ENCODE measurements at regions of chr4 and their contacts with region 1.

Region 1: GRCh38 chr4:153750197-153750817 is 9.5 kb downstream of the RNF175 start:
- DNase-seq: peak; percentile 72
- H3K4me3 ChIP-seq: no peak overlapping the region
- H3K27ac ChIP-seq: no peak overlapping the region
- H3K4me1 ChIP-seq: peaks cover 6 to 13% of the 10 kb centered on the region in 2 experiments; a peak in 3 of 4 replicates
- H3K27me3 ChIP-seq: no peaks in the 10 kb centered on the region
- CTCF ChIP-seq: peak; percentile 87
- EP300 ChIP-seq: no peak
- RAD21 ChIP-seq: peak; percentile 94

Region 2: GRCh38 chr4:153344131-153345010 is 405.9 kb before region 1 on chr4 and contains the start of gene MND1:
- CTCF ChIA-PET with region 1: interaction called, 24 read pairs
- POLR2A ChIA-PET with region 1: no interaction called
- DNase-seq: peak; percentile 96
- H3K4me3 ChIP-seq: peak within 1 kb of the TSS; percentile 87 to 90
- H3K27ac ChIP-seq: peak within 1 kb of the TSS; percentile 51 to 71
- H3K4me1 ChIP-seq: peaks cover 8 to 9% of the 10 kb centered on the region in 2 experiments
- H3K27me3 ChIP-seq: no peaks in the 10 kb centered on the region
- CTCF ChIP-seq: peak; percentile 95
- EP300 ChIP-seq: no peak
- RAD21 ChIP-seq: peak; percentile 86
- polyA plus RNA-seq, gene MND1: 1.3 and 2.4 TPM in 2 replicates

Region 3: GRCh38 chr4:153634738-153635353 is 115.5 kb before region 1 on chr4:
- CTCF ChIA-PET with region 1: interaction called, 89 read pairs
- POLR2A ChIA-PET with region 1: no interaction called
- DNase-seq: peak; percentile 56
- H3K4me3 ChIP-seq: no peak overlapping the region; a peak in 1 of 4 replicates
- H3K27ac ChIP-seq: no peak overlapping the region
- H3K4me1 ChIP-seq: no peaks in the 10 kb centered on the region
- H3K27me3 ChIP-seq: no peaks in the 10 kb centered on the region
- CTCF ChIP-seq: peak; percentile 65
- EP300 ChIP-seq: no peak
- RAD21 ChIP-seq: peak; percentile 67

Region 4: GRCh38 chr4:153649572-153649991 is 100.7 kb before region 1 on chr4:
- CTCF ChIA-PET with region 1: interaction called, 46 read pairs
- POLR2A ChIA-PET with region 1: no interaction called
- DNase-seq: no peak
- H3K4me3 ChIP-seq: no peak overlapping the region
- H3K27ac ChIP-seq: no peak overlapping the region
- H3K4me1 ChIP-seq: no peaks in the 10 kb centered on the region; a peak in 1 of 4 replicates
- H3K27me3 ChIP-seq: no peaks in the 10 kb centered on the region
- CTCF ChIP-seq: peak; percentile 42
- EP300 ChIP-seq: no peak
- RAD21 ChIP-seq: peak; percentile 28

Region 5: GRCh38 chr4:153722036-153722435 is 28.3 kb before region 1 on chr4:
- CTCF ChIA-PET with region 1: interaction called, 15 read pairs
- POLR2A ChIA-PET with region 1: no interaction called
- DNase-seq: no peak
- H3K4me3 ChIP-seq: no peak overlapping the region
- H3K27ac ChIP-seq: no peak overlapping the region
- H3K4me1 ChIP-seq: no peaks in the 10 kb centered on the region
- H3K27me3 ChIP-seq: no peaks in the 10 kb centered on the region
- CTCF ChIP-seq: no peak
- EP300 ChIP-seq: no peak
- RAD21 ChIP-seq: no peak

Measured in SK-N-SH (cell line).